Common myeloid progenitor, CD34-positive (primary cell): ENCODE measurements at regions of chr3 and their contacts with region 1.

Region 1: GRCh38 chr3:160027541-160028195 is 39.0 kb downstream of the IL12A start:
- DNase-seq: peak; percentile 79 to 96 (median 95)
- H3K4me3 ChIP-seq: peak overlapping the region in 1 of 7 experiments; percentile 23
- H3K27ac ChIP-seq: peak overlapping the region; percentile 90 to 94
- H3K4me1 ChIP-seq: peaks cover 5 to 58% (median 38%) of the 10 kb centered on the region in 4 experiments
- H3K27me3 ChIP-seq: no peaks in the 10 kb centered on the region

Region 2: DNA sequence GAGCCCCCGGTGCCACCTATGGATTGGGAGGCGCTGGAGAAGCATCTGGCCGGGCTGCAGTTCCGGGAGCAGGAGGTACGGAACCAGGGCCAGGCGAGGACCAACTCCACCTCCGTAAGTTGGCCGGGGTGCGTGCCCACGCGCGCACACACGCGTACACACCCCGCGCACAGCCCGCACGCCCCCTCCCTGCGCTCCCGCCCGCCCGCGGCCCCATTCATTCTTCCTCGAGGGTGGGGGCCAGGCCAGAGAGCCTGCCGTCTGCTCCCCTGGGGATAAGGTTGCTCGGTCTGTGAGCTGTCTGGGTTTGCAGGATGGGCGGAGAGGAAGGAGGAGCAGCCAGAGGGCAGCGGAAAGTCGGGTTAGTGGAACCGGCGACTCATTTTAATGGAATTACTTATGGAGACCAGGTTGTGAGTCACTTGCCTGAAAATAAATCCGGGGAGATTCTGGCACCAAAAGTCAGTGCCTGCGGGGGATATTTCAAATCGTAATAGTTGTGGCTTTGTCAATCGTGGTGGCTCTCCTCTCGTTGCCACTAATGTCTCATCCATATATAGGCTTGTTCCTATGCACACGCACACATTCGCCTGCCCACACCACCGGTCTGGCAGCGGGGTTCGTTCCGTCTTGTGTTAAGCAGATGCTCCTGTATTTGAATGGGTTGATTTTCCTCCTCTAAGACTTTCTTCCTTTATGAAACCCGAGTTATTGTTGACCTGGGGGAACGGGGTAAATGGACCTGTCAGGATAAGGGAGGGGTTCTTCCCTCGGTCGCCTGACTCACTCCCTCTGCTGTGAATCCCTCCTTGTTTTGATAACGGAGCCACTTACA is 262.4 kb before region 1 on chr3:
- CTCF ChIA-PET with region 1: no interaction called
- POLR2A ChIA-PET with region 1: no interaction called
- DNase-seq: peak in 2 of 3 donors; percentile 66 to 74
- H3K4me3 ChIP-seq: peak overlapping the region; percentile 34 to 87 (median 77)
- H3K27ac ChIP-seq: no peak overlapping the region
- H3K4me1 ChIP-seq: peaks cover 4 to 30% (median 23%) of the 10 kb centered on the region in 4 experiments
- H3K27me3 ChIP-seq: peaks cover 0 to 4% (median 0%) of the 10 kb centered on the region in 5 experiments

Region 3: GRCh38 chr3:159996018-159996417 is 31.6 kb before region 1 on chr3:
- CTCF ChIA-PET with region 1: no interaction called
- POLR2A ChIA-PET with region 1: no interaction called
- DNase-seq: no peak
- H3K4me3 ChIP-seq: no peak overlapping the region
- H3K27ac ChIP-seq: no peak overlapping the region
- H3K4me1 ChIP-seq: peaks cover 0 to 4% (median 0%) of the 10 kb centered on the region in 4 experiments
- H3K27me3 ChIP-seq: no peaks in the 10 kb centered on the region

Region 4: DNA sequence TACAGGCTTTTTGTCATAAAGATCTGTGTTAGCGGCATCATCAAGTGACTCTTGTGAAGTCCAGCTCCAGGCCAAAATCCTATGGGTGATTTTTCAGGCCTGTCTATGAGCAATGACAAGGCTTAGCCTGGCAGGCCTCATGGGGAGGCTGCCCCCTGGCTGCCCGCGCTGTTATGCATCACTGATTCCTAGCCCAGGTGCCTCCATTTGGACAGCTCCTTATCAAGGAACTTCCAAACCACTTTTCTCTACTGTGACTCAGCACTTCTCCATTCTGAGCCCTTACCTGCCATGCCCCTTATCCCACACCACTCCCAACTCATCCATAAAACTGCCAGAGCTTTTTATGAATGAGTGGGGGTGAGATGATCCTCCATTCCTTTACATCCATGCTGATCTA is 106.1 kb after region 1 on chr3:
- CTCF ChIA-PET with region 1: interaction called, 25 read pairs
- POLR2A ChIA-PET with region 1: no interaction called
- DNase-seq: peak; percentile 36 to 72 (median 59)
- H3K4me3 ChIP-seq: no peak overlapping the region
- H3K27ac ChIP-seq: no peak overlapping the region
- H3K4me1 ChIP-seq: peaks cover 0 to 56% (median 36%) of the 10 kb centered on the region in 4 experiments
- H3K27me3 ChIP-seq: no peaks in the 10 kb centered on the region

Region 5: GRCh38 chr3:160140756-160141155 is 113.1 kb after region 1 on chr3:
- CTCF ChIA-PET with region 1: interaction called, 11 read pairs
- POLR2A ChIA-PET with region 1: no interaction called
- DNase-seq: peak in 1 of 3 donors; percentile 16
- H3K4me3 ChIP-seq: no peak overlapping the region
- H3K27ac ChIP-seq: no peak overlapping the region
- H3K4me1 ChIP-seq: peaks cover 0 to 22% (median 12%) of the 10 kb centered on the region in 4 experiments
- H3K27me3 ChIP-seq: no peaks in the 10 kb centered on the region

Region 6: DNA sequence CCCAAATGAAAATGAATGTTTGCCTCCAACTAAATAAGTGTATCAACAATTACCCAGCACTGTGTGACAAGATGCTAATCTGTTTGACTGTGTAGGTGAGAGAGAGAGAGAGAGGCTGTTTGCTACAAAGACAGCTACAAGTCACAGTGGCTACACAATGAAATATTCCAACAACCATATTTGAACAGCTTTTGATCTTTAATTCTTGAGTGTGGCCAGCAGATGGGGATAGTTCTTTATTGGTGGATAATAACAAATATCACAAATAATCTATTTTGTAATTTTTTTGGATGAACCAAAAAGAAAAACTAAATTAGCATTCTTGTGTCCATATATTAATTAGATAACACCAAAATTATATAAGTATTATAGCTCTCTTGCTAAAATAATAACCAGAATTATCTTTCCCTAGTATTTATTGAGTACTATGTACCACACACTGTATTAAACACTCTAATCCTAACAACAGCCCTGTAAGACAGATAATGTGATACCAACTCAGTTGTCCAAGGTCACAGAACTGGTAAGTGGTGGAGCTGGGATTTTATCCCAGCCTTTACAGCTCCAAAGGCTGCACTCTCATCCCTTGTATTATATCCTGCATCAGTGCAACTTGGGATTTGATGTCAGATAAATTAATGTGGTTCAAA is 135.7 kb after region 1 on chr3:
- CTCF ChIA-PET with region 1: interaction called, 19 read pairs
- POLR2A ChIA-PET with region 1: no interaction called
- DNase-seq: peak; percentile 56 to 62 (median 60)
- H3K4me3 ChIP-seq: no peak overlapping the region
- H3K27ac ChIP-seq: no peak overlapping the region
- H3K4me1 ChIP-seq: peaks cover 0 to 6% (median 2%) of the 10 kb centered on the region in 4 experiments
- H3K27me3 ChIP-seq: no peaks in the 10 kb centered on the region

Region 7: DNA sequence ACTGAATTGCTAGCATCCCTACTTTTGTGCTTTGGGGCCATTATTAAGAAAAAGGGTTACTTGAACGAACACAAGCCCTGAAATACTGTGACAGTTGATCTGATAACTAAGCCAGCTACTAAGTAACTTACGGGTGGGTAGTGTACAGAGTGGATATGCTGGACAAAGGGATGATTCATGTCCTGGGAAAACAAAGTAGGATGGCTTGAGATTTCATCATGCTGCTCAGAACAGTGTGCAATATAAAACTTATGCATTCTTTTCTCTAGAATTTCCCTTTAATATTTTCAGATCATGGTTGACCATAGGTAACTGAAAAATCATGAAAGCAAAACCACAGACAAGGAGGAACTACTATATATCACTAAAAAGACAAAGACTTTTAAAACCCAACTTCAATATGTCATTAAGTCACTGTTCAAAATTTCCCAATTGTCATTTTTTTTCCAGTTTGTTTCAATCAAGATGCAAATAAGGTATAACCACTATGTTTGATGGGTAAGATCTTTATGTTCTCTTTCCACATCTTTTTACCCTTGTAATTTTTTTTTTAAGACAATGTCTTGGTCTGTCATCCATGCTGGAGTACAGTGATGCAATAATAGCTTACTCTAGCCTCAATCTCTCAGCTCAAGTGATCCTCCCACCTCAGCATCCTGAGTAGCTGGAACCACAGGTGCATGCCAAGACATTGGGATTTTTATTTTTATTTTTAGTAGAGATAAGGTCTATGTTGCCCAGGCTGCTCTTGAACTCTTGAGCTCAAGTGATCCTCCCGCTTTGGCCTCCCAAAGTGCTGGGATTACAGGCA is 303.7 kb after region 1 on chr3:
- CTCF ChIA-PET with region 1: no interaction called
- POLR2A ChIA-PET with region 1: no interaction called
- DNase-seq: no peak
- H3K4me3 ChIP-seq: no peak overlapping the region
- H3K27ac ChIP-seq: no peak overlapping the region
- H3K4me1 ChIP-seq: peaks cover 0 to 9% (median 0%) of the 10 kb centered on the region in 4 experiments
- H3K27me3 ChIP-seq: no peaks in the 10 kb centered on the region